Body of pancreas (tissue), 4 donors: ENCODE measurements at regions of chr19 and their contacts with region 1.

Region 1: GRCh38 chr19:28883241-28883693 is 329.7 kb downstream of the UQCRFS1 start:
- DNase-seq: peak in 1 of 4 donors; percentile 7
- ATAC-seq: no peak
- H3K4me3 ChIP-seq: no peak overlapping the region
- H3K27ac ChIP-seq: no peak overlapping the region
- H3K4me1 ChIP-seq: peaks cover 7% of the 10 kb centered on the region
- H3K27me3 ChIP-seq: no peaks in the 10 kb centered on the region
- CTCF ChIP-seq: no peak
- POLR2A ChIP-seq: no peak

Region 2: GRCh38 chr19:28472843-28473242 is 410.4 kb before region 1 on chr19:
- intact Hi-C with region 1: loop called (anchors 10 kb)
- DNase-seq: peak in 2 of 4 donors; percentile 17 to 36
- ATAC-seq: no peak
- H3K4me3 ChIP-seq: no peak overlapping the region
- H3K27ac ChIP-seq: no peak overlapping the region
- H3K4me1 ChIP-seq: peaks cover 13% of the 10 kb centered on the region
- H3K27me3 ChIP-seq: no peaks in the 10 kb centered on the region
- CTCF ChIP-seq: no peak
- POLR2A ChIP-seq: no peak

Region 3: GRCh38 chr19:28737021-28737895 is 146.0 kb before region 1 on chr19:
- intact Hi-C with region 1: loop called (anchors 5 kb)
- DNase-seq: peak in 2 of 4 donors; percentile 14 to 22
- ATAC-seq: peak; percentile 27
- H3K4me3 ChIP-seq: no peak overlapping the region
- H3K27ac ChIP-seq: no peak overlapping the region
- H3K4me1 ChIP-seq: peaks cover 11% of the 10 kb centered on the region
- H3K27me3 ChIP-seq: no peaks in the 10 kb centered on the region
- CTCF ChIP-seq: peak; percentile 52 to 68 (median 57)
- POLR2A ChIP-seq: no peak